ENCODE measurements at regions of chr7 and their contacts with region 1.

Region 1: DNA sequence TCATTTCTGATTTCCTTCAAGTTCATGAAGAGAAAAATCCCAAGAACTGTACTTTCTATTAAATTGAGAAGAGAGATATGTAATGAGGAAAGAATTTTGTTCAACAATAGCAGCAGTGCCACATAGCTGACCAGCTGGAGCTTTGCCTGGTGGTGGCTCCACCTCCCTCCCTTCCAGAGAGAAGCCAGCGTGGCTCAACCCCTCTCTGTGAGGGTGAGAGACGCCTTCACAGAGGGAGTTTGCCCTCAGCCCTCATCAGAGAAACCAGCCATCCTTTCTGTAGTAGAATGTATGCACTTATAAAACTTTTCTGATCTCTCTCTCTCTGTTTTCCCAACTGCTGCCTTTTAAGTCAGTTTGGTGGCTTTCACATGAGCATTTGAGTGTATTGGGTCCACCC is 20.5 kb upstream of the COL1A2 start:
- DNase-seq: peak; percentile 91
- ATAC-seq: peak; percentile 94

Region 2: DNA sequence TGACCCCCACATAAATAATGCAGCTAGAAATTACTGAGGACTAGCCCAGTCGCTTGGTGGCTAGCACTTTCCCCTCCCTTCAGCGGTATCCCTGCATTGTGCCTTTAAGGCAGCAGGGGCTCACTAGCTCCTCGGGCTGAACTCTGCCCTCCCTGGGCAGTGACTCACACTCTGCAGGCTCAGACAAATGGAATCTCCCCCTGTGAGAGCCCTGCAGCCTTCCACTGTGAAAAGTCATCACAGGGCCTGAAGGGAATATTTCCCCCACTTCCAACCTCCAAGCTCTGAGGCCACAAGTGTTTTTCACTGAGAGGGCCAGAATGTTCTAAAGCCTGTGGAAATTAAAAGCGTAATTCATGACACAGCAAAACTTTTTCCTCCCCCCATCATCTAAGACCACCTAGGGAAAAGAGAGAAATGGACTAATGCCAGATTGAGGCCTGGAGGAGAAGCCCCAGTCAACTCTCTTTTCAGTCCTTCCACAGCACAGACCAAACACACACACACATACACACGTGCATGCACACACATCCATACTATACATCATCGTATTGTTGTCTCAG is 73.1 kb before region 1 on chr7:
- intact Hi-C with region 1: loop called (anchors 10 kb)
- DNase-seq: peak; percentile 82
- ATAC-seq: peak; percentile 88

Measured in sciatic nerve (tissue), 2 donors.